K562 (cell line): ENCODE measurements at regions of chr6 and their contacts with region 1.

Region 1: DNA sequence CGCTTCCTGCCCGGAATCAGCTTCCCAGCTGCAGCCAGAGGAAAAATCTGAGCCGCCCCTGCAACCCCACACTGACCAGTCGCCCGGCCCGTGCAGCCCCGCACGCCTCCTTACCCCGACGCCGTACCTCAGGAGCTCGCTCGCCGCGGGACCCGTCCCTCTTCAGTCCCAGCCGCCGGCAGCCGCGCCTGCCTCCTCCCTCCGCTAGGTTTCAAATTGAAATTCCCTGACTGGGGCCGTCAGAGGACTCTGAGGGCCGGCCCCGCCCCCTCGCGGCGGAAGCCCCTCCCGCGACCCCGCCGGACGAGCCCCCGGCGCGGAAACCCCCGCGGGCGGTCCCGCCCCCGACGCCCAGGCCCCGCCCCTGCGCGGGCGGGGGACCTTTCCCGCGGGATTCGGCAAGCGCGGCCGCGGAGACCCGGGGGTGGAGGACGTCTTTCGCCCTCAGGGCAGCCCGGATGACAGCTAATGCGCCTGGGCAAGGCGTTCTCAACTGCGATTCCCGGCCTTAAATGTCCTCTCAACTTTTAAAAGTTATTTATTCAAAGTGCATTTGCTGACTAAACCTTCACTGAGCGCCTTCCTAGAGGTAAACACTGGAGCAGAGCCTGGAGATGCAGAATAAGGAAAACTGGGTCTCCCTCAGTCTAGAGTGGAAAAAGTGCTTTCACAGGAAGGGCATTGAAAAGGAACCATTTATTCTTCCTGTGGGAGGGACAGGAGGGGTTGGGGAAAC is at the start of gene EPB41L2:
- DNase-seq: peak; percentile 86 to 90 (median 86)
- ATAC-seq: peak; percentile 91
- H3K4me3 ChIP-seq: peak within 1 kb of the TSS; percentile 62
- H3K27ac ChIP-seq: peak within 1 kb of the TSS; percentile 64; the same call in 2 of the 3 replicates
- H3K4me1 ChIP-seq: peaks cover 3 to 16% of the 10 kb centered on the region in 2 experiments; a peak in 4 of 5 replicates
- H3K27me3 ChIP-seq: no peaks in the 10 kb centered on the region
- CTCF ChIP-seq: 0 out of 6 replicates have a peak, but pooled peaks of 2 of the 3 experiments have one; percentile 5 to 31
- EP300 ChIP-seq: no peak
- POLR2A ChIP-seq: peak; percentile 54; the same call in 1 of the 2 replicates
- RAD21 ChIP-seq: no peak
- polyA plus RNA-seq, gene EPB41L2: 5.1 to 12.2 TPM

Region 2: DNA sequence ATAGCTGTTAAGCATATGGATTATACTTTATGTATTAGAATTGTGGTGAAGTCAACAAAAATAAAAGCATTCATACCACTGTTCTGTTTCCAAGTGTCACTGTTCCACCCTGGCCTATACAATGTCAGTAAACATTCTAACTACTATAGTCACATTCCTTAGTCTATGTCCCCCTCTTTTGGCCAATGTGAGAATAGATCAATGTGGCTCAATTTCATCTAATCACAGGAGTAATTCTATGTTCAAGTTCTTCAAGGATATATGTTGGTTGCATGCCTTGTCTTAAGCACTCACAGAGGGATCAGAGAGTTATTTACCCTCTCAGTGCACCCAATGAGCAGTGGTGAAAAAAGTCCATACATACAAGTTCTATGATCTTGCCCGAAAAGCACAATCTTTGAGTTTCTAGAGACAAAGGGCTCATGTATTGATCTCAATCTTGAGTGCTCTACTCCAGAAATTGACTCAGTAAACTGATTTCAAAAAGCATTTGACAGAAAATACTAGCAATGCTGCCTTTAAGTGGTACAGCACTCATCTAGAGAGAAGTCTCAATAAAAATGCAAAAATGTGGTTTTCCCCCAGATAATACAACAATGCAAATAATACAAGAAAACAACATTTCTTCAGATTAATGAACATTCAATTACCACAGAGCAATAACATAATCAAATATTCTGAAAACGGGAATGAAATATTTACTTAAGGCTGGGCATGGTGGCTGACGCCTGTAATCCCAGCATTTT is 219.4 kb before region 1 on chr6:
- CTCF ChIA-PET with region 1: no interaction called
- POLR2A ChIA-PET with region 1: no interaction called
- in situ Hi-C with region 1: no loop called
- intact Hi-C with region 1: no loop called
- DNase-seq: peak in 2 of 4 experiments; percentile 32 to 38
- ATAC-seq: peak; percentile 85
- H3K4me3 ChIP-seq: no peak overlapping the region
- H3K27ac ChIP-seq: no peak overlapping the region
- H3K4me1 ChIP-seq: no peaks in the 10 kb centered on the region
- H3K27me3 ChIP-seq: no peaks in the 10 kb centered on the region
- CTCF ChIP-seq: peak; percentile 41 to 65 (median 59); a peak in 5 of 6 replicates
- EP300 ChIP-seq: no peak
- POLR2A ChIP-seq: no peak
- RAD21 ChIP-seq: peak; percentile 70 to 77

Region 3: DNA sequence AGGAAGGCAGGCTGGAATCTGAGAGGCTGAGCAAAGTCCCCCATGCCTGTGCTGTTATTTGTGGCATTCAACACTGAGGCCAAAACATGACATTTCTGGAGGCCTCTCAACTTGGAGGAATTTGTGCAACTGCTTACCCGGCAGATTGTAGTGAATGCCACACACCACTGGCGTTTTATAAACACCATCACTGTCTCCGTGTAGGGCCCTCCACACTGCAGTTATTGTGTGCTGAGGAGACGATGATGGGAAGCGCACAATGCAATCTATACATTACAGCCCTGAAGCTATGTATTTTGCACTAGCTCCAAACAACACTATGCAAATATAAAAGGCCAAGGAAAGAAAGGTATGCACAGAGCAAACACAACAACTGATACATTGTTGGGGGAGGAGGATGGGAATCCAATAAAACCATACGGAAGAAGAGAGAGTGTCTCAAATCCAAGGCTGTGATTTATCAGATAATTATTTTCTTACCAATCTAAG is 129.4 kb before region 1 on chr6:
- CTCF ChIA-PET with region 1: no interaction called
- POLR2A ChIA-PET with region 1: no interaction called
- in situ Hi-C with region 1: no loop called
- intact Hi-C with region 1: no loop called
- DNase-seq: no peak
- ATAC-seq: no peak; the same call in 2 of the 3 replicates
- H3K4me3 ChIP-seq: no peak overlapping the region
- H3K27ac ChIP-seq: no peak overlapping the region
- H3K4me1 ChIP-seq: no peaks in the 10 kb centered on the region; a peak in 1 of 5 replicates
- H3K27me3 ChIP-seq: no peaks in the 10 kb centered on the region
- CTCF ChIP-seq: no peak
- EP300 ChIP-seq: no peak
- POLR2A ChIP-seq: no peak
- RAD21 ChIP-seq: no peak

Region 4: DNA sequence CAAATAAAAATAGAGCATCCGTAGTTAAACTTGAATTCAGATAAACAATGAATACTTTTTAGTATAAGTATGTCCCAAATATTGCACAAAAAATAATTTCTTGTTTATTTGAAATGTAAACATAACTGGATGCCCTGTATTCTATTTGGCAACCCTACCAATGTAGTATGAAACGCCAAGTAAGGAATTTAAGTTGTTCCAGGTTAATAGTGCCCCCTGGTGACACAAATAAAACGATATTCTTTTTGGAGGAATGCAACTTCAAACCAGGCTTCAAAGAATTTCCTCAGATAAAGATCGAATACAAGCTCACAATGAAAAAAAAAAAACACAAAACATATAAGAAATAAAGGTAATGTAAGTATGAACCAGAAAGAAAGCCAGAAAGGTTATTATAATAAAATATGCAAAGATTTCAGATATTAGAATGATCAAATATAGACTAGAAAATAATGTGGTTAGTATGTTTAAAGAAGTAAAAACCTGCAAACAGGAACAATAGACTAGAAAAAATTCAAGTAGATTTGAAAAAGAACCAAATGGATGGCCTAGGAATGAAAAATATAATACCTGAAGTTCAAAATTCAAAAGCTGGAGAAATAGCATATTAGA is 53.7 kb after region 1 on chr6:
- CTCF ChIA-PET with region 1: no interaction called
- POLR2A ChIA-PET with region 1: no interaction called
- in situ Hi-C with region 1: no loop called
- intact Hi-C with region 1: loop called (anchors 5 kb)
- DNase-seq: peak; percentile 22 to 55 (median 40)
- ATAC-seq: peak; percentile 82
- H3K4me3 ChIP-seq: no peak overlapping the region
- H3K27ac ChIP-seq: no peak overlapping the region
- H3K4me1 ChIP-seq: no peaks in the 10 kb centered on the region
- H3K27me3 ChIP-seq: no peaks in the 10 kb centered on the region
- CTCF ChIP-seq: peak; percentile 37 to 63 (median 42); a peak in 4 of 6 replicates
- EP300 ChIP-seq: no peak
- POLR2A ChIP-seq: no peak
- RAD21 ChIP-seq: peak; percentile 83 to 86